PC-3 (cell line): ENCODE measurements at regions of chr2 and their contacts with region 1.

Region 1: DNA sequence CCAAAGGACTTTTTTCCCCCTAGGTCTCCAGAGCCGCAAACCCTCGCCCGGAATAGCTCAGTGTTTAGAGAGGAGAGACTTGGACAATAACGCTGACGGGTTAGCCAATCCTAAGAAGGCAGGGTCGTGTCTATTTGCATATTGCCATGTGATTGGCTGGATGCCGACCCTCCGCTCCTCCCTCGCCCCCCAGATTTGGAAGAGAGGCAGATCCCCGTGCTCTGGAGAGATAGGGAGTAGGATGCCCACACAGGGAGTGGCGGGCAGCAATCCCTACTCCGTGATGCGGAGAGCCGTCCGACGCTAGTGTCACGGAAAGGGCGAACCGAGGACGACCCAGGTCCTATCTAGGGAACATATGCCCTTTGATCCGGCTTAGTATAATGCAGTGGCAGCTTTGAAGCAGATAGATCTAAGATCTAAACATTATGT is 1.4 kb downstream of the WNT6 start:
- DNase-seq: no peak
- ATAC-seq: no peak
- H3K4me3 ChIP-seq: no peak overlapping the region
- H3K27ac ChIP-seq: no peak overlapping the region
- H3K4me1 ChIP-seq: no peaks in the 10 kb centered on the region
- H3K27me3 ChIP-seq: peaks cover 30% of the 10 kb centered on the region
- CTCF ChIP-seq: no peak

Region 2: GRCh38 chr2:218898109-218898878 is 37.3 kb after region 1 on chr2:
- CTCF ChIA-PET with region 1: interaction called, 13 read pairs
- POLR2A ChIA-PET with region 1: no interaction called
- intact Hi-C with region 1: no loop called
- DNase-seq: peak; percentile 64
- ATAC-seq: peak; percentile 19
- H3K4me3 ChIP-seq: no peak overlapping the region
- H3K27ac ChIP-seq: no peak overlapping the region
- H3K4me1 ChIP-seq: peaks cover 47% of the 10 kb centered on the region
- H3K27me3 ChIP-seq: no peaks in the 10 kb centered on the region
- CTCF ChIP-seq: peak; percentile 93

Region 3: GRCh38 chr2:219543601-219544358 is 682.8 kb after region 1 on chr2 and contains the starts of genes CHPF and TMEM198:
- CTCF ChIA-PET with region 1: interaction called, 10 read pairs
- POLR2A ChIA-PET with region 1: no interaction called
- intact Hi-C with region 1: no loop called
- DNase-seq: peak; percentile 98
- ATAC-seq: peak; percentile 78
- H3K4me3 ChIP-seq: peak within 1 kb of the TSS; percentile 91
- H3K27ac ChIP-seq: peak within 1 kb of the TSS; percentile 56
- H3K4me1 ChIP-seq: peaks cover 7% of the 10 kb centered on the region; the same call in 1 of the 2 replicates
- H3K27me3 ChIP-seq: no peaks in the 10 kb centered on the region
- CTCF ChIP-seq: no peak
- total RNA-seq, gene CHPF: 139 and 210 TPM in 2 replicates
- total RNA-seq, gene TMEM198: 1.1 and 5.2 TPM in 2 replicates